ENCODE measurements at regions of chr2 and their contacts with region 1.

Region 1: DNA sequence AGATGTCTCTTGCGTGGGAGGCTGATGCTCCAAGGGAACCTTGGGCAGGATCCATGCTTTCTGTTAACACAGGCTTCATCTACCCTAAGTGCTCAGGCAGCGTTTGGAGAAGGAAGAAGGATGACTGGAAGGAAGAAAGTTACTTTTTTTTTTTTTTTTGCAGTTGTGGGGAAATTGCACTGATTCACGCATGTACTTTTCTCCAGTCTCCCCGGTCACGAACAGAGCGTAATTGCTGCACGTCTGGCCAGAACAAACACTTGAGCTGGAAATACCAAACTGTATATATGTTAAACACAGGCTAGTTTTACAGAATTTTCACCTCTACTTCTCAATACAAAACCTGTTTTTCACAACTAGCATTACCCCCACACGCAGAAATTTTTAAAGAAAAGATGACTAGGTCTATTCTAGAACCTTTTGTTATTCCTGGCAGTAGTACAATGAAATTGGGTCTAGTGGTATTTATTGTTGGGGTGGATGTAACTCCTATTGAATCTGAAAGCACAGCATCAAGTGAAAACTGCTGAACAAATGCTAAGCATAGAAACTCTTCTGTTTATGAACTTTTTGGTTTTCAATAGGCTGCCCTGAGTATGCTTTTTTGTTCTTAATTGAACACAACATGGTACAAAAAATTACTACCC is 9.3 kb upstream of the SCYGR5 start:
- DNase-seq: no peak
- H3K27ac ChIP-seq: no peak overlapping the region
- CTCF ChIP-seq: no peak

Region 2: DNA sequence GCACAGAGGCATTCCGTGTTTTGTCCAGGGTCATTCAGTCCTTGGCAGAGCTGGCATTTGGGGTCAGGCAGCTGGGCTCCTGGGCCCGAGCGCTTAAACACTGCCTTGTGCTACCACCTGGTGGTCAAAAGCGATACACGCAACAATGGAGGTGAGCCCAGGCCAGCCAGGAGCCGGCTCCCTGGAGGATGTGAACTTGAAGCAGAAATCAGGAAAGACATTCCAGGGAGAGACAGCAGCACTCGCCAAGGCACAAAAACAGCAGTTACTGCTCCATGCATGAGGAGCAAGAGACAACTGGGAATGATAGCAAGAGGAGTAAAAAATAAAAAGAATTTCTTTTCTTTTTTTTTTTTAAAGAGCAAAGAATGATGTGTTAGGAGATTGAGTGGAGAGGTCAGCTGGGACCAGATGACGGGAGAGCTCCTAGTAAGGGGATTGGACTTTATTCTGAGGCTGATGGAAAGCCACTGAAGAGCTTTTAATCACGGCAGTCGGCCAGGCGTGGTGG is 109.1 kb after region 1 on chr2:
- CTCF ChIA-PET with region 1: interaction called, 43 read pairs
- POLR2A ChIA-PET with region 1: no interaction called
- DNase-seq: peak; percentile 72
- H3K27ac ChIP-seq: no peak overlapping the region
- CTCF ChIP-seq: peak; percentile 82